ENCODE measurements at regions of chr9 and their contacts with region 1.

Region 1: DNA sequence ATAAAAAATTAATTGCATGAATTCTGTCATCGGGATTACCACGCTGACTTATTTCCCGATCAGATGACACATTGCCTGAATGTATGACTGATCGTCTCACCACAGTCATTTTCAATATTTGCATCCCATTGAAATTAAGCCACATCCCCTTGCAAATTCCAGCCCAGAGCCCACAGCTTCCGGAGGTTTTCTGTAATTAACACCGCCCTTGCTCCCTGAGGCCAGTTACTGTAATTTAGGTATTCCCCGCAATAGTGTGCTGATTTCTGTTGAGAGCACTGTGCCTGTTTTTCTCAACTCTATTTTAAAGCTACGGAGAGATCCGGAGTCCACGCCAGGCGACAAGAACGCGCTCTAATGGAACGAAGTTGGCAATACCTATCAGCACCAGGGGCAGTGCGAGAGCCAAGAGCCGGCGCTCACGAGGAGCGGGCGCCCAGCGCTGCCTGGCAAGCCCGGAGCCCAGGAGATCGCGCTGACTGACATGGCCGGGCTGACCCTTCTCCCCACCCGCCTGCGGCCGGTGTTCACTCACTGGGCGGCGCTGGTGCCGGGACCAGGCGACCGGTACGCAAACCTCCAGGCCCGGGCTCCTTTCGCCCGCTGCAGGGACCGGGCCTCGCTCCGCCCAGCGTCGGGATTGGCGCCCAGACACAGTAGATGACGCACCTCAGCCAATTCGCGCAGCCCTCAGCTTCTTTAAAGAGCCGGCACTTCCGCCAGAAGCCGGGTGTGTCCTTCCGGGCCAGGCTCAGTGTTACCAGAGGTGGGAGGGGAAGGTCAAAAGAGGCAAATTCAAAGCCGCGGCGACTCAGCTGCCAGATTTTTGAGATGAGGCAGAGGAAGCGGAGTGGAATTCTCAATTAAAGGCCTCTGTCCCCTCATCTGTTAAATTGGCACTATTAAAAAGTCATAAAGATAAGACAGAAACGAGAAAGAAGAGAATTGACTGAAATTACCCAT is at the start of gene PLGRKT:
- DNase-seq: peak; percentile 95 to 98 (median 97)
- ATAC-seq: peak; percentile 98 to 99 (median 99)
- H3K4me3 ChIP-seq: peak within 1 kb of the TSS; percentile 32 to 84 (median 75)
- H3K27ac ChIP-seq: peak within 1 kb of the TSS; percentile 83 to 99 (median 94)
- H3K4me1 ChIP-seq: peaks cover 0 to 24% (median 18%) of the 10 kb centered on the region in 12 donors
- H3K27me3 ChIP-seq: no peaks in the 10 kb centered on the region
- CTCF ChIP-seq: peak in 8 of 12 donors; percentile 8 to 56 (median 30)
- POLR2A ChIP-seq: peak in 1 of 2 donors; percentile 95
- total RNA-seq, gene PLGRKT: 20.8 to 37.2 (median 31.0) TPM

Region 2: DNA sequence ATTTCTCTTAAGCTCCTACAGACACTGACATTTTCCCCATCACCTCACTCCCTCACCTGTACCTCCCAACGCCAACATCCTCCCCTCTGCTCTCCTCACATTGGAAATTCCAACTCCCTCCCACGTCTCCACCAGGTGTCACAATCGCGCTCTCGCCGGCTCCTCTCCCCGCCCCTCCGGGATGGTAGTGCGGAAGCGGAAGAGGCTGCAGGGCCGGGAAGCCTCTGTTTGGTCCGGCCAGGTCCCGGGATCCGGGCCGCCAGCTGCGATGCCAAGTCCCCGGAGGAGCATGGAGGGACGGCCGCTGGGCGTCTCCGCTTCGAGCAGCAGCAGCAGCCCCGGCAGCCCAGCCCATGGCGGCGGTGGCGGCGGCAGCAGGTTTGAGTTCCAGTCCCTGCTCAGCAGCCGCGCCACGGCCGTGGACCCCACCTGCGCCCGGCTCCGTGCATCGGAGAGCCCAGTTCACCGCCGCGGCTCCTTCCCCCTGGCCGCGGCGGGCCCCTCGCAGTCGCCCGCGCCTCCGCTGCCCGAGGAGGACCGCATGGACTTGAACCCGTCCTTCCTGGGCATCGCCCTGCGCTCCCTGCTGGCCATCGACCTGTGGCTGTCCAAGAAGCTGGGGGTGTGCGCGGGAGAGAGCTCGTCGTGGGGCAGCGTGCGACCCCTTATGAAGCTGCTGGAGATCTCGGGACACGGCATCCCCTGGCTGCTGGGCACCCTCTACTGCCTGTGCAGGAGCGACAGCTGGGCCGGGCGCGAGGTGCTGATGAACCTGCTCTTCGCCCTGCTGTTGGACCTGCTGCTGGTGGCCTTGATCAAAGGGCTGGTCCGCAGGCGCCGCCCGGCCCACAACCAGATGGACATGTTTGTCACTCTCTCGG is 775.2 kb before region 1 on chr9 and contains the start of gene PLPP6:
- intact Hi-C with region 1: loop called in 1 of 10 experiments (anchors 10 kb)
- DNase-seq: peak; percentile 88 to 92 (median 90)
- ATAC-seq: peak; percentile 92 to 97 (median 96)
- H3K4me3 ChIP-seq: peak within 1 kb of the TSS; percentile 50 to 96 (median 81)
- H3K27ac ChIP-seq: peak within 1 kb of the TSS; percentile 27 to 90 (median 78)
- H3K4me1 ChIP-seq: peaks cover 0 to 51% (median 32%) of the 10 kb centered on the region in 12 donors
- H3K27me3 ChIP-seq: no peaks in the 10 kb centered on the region
- CTCF ChIP-seq: peak; percentile 29 to 72 (median 52)
- POLR2A ChIP-seq: peak in 1 of 2 donors; percentile 74
- total RNA-seq, gene PLPP6: 2.4 to 5.4 (median 3.6) TPM

Region 3: DNA sequence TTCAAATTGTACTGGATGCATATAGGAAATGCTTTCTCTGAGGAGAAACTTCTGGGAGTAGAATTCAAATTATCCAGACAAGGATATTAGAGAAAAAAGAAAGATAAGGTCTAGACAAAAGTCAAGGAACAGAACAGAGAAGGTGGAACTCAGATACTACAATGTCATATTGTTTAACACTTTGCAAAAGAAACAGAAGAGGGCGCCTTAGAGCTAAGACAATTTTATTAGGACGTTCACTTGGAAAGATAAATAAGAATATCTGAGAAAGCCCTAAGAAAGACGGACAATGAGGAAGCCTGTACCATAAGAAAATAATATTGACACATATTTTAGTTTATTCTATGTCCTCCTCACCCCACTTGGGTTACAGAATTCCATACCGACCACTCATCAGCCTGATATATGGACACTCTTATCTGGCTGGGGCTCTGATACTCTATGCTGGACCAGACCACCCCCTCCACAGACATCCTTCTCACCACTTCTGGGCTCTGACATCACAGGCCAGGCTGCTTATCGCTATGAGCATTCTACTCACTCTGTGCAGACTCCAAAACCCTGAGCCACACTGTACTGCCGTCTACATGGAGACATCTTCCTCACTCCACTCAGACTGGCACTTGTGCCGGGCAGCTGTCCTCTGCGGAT is 687.4 kb before region 1 on chr9:
- intact Hi-C with region 1: loop called in 3 of 10 experiments (anchors 10 kb)
- DNase-seq: peak in 1 of 5 donors; percentile 37
- ATAC-seq: peak in 3 of 4 donors; percentile 42 to 77 (median 64)
- H3K4me3 ChIP-seq: no peak overlapping the region
- H3K27ac ChIP-seq: no peak overlapping the region
- H3K4me1 ChIP-seq: peaks cover 0 to 3% (median 0%) of the 10 kb centered on the region in 12 donors
- H3K27me3 ChIP-seq: no peaks in the 10 kb centered on the region
- CTCF ChIP-seq: peak; percentile 34 to 73 (median 58)
- POLR2A ChIP-seq: no peak

Region 4: DNA sequence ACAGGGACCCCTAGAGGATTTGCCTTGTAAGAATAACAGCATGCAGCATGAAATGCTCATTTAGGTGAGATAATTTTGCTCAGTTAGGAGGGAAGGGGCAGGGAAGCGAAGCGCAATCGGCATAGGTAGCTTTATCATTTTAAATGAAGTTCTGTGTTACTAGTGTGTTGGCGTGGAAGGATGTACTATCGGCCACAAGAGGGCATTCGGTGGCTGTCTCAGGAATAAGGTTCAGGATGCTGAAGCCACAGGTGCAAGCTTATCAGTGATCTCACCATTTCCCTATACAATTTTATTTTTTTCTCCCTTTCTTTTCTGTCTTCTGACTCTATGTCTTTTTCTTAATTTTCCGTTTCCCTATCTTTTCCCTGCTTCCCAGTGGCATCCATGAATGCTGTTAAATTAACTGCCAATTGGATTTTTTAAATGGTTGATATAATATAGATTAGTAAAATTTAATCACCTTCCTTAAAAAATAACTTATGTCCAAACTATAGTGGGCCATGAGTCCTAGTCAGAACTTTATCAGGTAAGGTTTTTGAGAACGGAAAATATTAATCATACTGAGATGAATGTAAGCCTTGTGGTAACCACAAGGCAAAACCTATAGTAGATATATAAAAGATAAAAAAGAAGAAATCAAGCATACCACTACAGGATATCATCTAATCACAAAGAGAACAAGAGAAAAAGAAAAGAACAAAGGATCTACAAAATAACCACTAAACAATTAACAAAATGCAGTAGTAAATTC is 250.9 kb before region 1 on chr9:
- intact Hi-C with region 1: loop called in 9 of 10 experiments (anchors 2 to 5 kb)
- DNase-seq: peak in 3 of 5 donors; percentile 27 to 32 (median 29)
- ATAC-seq: peak in 3 of 4 donors; percentile 70 to 76 (median 70)
- H3K4me3 ChIP-seq: no peak overlapping the region
- H3K27ac ChIP-seq: no peak overlapping the region
- H3K4me1 ChIP-seq: no peaks in the 10 kb centered on the region
- H3K27me3 ChIP-seq: peaks cover 0 to 8% (median 0%) of the 10 kb centered on the region in 9 donors
- CTCF ChIP-seq: peak; percentile 44 to 74 (median 69)
- POLR2A ChIP-seq: no peak

Region 5: GRCh38 chr9:5459289-5459829 is 21.8 kb after region 1 on chr9:
- intact Hi-C with region 1: no loop called
- DNase-seq: no peak
- ATAC-seq: peak in 1 of 4 donors; percentile 48
- H3K4me3 ChIP-seq: no peak overlapping the region
- H3K27ac ChIP-seq: peak overlapping the region in 1 of 12 donors; percentile 50
- H3K4me1 ChIP-seq: peaks cover 0 to 58% (median 0%) of the 10 kb centered on the region in 12 donors
- H3K27me3 ChIP-seq: no peaks in the 10 kb centered on the region
- CTCF ChIP-seq: no peak
- POLR2A ChIP-seq: no peak

Region 6: GRCh38 chr9:5593904-5594303 is 156.4 kb after region 1 on chr9:
- intact Hi-C with region 1: loop called in 6 of 10 experiments (anchors 5 kb)
- DNase-seq: no peak
- ATAC-seq: no peak
- H3K4me3 ChIP-seq: no peak overlapping the region
- H3K27ac ChIP-seq: no peak overlapping the region
- H3K4me1 ChIP-seq: peaks cover 0 to 21% (median 3%) of the 10 kb centered on the region in 12 donors
- H3K27me3 ChIP-seq: no peaks in the 10 kb centered on the region
- CTCF ChIP-seq: no peak
- POLR2A ChIP-seq: no peak

Measured in heart left ventricle (tissue), 16 donors.